ENCODE measurements at regions of chr1 and their contacts with region 1.

Region 1: DNA sequence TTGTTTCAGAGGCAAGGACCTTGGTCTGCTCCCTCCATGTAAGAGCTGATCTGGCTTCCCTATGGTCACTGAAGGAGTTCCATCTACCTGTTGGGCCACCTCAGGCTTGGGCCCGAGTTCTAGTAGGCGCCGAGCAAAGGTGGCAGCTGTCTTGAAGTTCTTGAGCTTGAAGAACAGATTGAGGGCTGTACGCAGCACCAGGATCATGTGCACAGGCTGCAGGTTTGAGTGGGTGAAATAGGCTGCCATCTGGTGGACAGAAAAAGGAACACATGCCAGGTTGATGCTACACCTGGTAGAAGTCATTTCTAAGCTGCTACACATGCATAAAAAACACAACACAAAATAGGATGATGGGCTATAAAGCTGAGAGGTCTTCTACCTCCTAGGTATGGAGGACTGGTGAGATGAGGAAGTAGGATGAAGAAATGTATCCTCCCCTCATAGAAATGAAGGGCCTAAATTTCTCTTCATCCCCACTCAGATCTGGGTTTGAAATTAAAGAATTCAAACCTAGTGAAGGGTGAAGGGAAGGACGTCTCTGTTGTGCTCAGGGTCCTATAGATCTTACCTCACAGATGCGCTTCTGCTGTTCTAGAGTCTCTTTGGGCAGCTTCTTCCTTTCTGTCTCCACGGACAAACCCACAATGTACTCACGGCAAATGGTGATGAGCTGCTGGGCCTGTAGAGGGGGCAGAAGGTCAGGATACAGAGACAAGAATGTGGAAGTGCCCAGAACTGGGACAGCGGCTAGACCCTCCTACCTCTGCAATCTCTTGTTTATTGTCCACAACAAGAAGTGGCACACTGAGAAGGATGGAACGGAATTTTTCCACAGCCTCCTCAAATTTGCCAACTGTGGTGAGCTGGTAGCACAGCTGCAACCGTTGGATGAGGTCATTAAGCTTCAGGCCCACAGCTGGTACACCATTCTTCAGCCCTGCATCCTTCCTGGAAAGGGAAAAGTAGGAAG is 6.6 kb upstream of the PEX19 start:
- DNase-seq: peak; percentile 45
- ATAC-seq: peak; percentile 99
- H3K4me3 ChIP-seq: no peak overlapping the region
- H3K27ac ChIP-seq: no peak overlapping the region
- H3K4me1 ChIP-seq: no peaks in the 10 kb centered on the region
- H3K27me3 ChIP-seq: no peaks in the 10 kb centered on the region
- CTCF ChIP-seq: peak; percentile 74 to 84 (median 80)
- EP300 ChIP-seq: no peak
- POLR2A ChIP-seq: no peak
- RAD21 ChIP-seq: peak; percentile 67

Region 2: DNA sequence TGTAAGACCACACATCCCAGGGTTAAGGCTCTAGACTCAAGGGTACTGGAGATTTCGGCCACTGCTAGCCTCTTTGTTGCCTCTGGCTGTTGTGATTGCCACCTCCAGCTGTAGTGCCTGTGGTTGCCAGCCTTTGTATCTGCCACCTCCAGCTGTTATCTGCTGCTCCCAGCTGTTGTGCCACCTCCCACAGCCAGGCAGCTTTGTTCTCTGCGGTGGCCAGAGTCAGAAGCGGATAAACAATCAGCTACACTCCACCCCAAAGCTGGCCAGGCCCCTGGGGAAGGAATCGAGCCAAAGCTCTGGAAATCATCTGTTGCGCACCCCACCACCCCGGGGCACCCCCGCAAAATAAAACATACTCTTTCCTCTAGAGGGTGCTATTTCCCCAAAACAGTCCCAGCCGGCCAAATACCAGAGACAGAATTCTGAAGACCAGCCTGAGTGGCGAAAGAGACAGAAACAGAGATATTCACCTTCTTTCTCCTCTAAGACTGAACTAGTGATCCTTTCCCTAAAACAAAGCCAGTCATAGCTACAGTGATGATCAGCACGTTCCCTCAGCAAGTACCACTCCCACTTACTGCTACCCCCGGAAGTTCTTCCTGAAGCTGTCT is 244.9 kb before region 1 on chr1:
- CTCF ChIA-PET with region 1: interaction called, 10 read pairs
- POLR2A ChIA-PET with region 1: interaction called, 5 read pairs
- RAD21 ChIA-PET with region 1: no interaction called
- SMC1A ChIA-PET with region 1: interaction called, 6 read pairs
- in situ Hi-C with region 1: no loop called
- intact Hi-C with region 1: no loop called
- DNase-seq: no peak
- ATAC-seq: peak; percentile 96
- H3K4me3 ChIP-seq: 0 out of 2 replicates have a peak overlapping the region, but pooled peaks have one; percentile 16
- H3K27ac ChIP-seq: no peak overlapping the region
- H3K4me1 ChIP-seq: peaks cover 11% of the 10 kb centered on the region
- H3K27me3 ChIP-seq: no peaks in the 10 kb centered on the region; a peak in 3 of 4 replicates
- CTCF ChIP-seq: peak; percentile 54 to 65 (median 61)
- EP300 ChIP-seq: no peak
- POLR2A ChIP-seq: no peak
- RAD21 ChIP-seq: peak; percentile 78

Region 3: GRCh38 chr1:160161965-160162705 is 129.4 kb before region 1 on chr1:
- CTCF ChIA-PET with region 1: interaction called, 20 read pairs
- POLR2A ChIA-PET with region 1: no interaction called
- RAD21 ChIA-PET with region 1: interaction called, 14 read pairs
- SMC1A ChIA-PET with region 1: interaction called, 4 read pairs
- in situ Hi-C with region 1: no loop called
- intact Hi-C with region 1: no loop called
- DNase-seq: no peak
- ATAC-seq: peak; percentile 92
- H3K4me3 ChIP-seq: no peak overlapping the region
- H3K27ac ChIP-seq: no peak overlapping the region
- H3K4me1 ChIP-seq: peaks cover 17% of the 10 kb centered on the region
- H3K27me3 ChIP-seq: no peaks in the 10 kb centered on the region; a peak in 1 of 4 replicates
- CTCF ChIP-seq: peak; percentile 51 to 63 (median 60); a peak in 5 of 6 replicates
- EP300 ChIP-seq: no peak
- POLR2A ChIP-seq: no peak
- RAD21 ChIP-seq: peak; percentile 72

Region 4: DNA sequence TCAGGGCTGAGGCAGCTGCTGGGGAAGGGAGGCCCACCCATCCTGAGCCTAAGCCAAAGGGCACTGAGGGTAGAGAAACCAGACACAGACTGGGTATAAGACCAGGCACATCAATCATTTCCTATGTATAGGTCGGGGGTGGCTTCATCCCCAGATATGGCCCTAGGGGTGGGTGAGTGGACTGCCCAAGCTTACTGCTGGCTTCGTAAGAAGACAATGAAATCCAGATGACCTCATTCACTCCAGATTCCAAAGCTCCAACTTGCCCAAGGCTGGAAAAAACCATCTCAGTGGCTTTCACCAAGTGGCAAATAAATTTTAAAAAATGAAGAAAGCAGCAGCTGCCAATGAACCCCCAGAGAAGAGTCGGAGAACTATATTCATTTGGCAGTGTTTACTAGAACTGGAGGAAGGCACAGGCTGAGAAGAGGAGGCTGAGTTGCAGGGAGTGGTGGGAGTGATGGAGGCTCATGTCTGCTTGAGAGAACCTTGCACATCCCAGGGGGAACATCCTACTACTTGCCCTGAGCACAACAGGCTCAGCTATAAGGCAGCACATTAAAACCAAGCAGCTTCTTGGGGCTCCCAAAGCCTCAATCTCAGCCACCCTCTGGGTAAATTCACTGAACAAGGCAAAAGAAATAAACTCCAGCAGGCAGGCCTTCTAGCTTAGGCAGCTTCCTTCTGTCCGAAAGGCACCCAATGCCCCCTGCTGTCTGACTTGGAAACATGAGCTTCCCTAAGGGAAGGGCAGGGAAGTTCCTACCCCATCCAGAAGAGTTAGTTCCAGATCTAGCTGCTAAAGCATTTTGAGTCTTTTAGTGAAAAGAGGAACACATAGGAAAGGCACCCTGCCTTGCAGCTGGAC is 72.2 kb before region 1 on chr1:
- CTCF ChIA-PET with region 1: interaction called, 26 read pairs
- POLR2A ChIA-PET with region 1: no interaction called
- RAD21 ChIA-PET with region 1: interaction called, 9 read pairs
- SMC1A ChIA-PET with region 1: interaction called, 13 read pairs
- in situ Hi-C with region 1: no loop called
- intact Hi-C with region 1: no loop called
- DNase-seq: no peak
- ATAC-seq: peak; percentile 44
- H3K4me3 ChIP-seq: no peak overlapping the region
- H3K27ac ChIP-seq: no peak overlapping the region
- H3K4me1 ChIP-seq: no peaks in the 10 kb centered on the region
- H3K27me3 ChIP-seq: no peaks in the 10 kb centered on the region
- CTCF ChIP-seq: peak; percentile 21 to 34 (median 34); a peak in 3 of 6 replicates
- EP300 ChIP-seq: no peak
- POLR2A ChIP-seq: no peak
- RAD21 ChIP-seq: peak; percentile 43

Region 5: DNA sequence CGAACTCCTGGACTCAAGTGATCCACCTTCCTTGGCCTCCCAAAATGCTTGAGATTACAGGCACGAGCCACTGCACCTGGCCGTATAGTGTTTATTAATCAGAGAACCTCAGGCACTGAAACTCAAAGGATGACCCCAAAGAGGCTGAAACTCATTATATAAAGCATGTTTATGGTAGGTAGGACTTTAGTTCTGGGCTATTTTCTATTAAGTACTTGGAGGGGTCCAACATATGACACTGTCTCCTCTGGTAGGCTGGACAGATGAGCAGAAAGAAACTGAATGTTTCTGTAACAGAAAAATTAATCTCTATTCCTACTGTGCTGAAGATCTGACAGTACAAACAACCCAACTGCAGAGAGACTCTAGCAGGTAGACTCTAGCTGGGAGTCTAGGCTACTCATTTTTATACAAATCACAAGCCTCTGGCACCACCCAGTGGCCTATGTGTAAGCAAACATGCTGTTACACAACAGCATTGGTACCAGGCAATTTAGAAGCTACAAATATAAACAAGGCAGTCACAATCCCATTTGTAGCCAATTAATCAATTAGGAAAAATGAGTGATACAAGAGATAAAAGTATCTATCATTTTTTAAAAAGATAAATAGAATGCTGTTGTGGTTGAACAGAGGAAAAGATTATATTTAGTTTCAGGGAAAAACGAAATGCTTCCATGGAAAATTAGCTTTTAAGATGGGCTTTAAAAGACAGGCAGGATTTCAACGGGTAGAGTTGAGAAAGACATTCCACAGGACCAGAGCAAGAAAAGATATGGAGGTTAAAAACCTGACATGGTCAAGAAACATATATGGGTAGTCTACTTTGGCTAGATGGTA is 39.6 kb before region 1 on chr1:
- CTCF ChIA-PET with region 1: interaction called, 141 read pairs
- POLR2A ChIA-PET with region 1: no interaction called
- RAD21 ChIA-PET with region 1: interaction called, 49 read pairs
- SMC1A ChIA-PET with region 1: interaction called, 98 read pairs
- in situ Hi-C with region 1: no loop called
- intact Hi-C with region 1: loop called (anchors 5 kb)
- DNase-seq: peak; percentile 31
- ATAC-seq: peak; percentile 98
- H3K4me3 ChIP-seq: no peak overlapping the region
- H3K27ac ChIP-seq: no peak overlapping the region; the same call in 1 of the 2 replicates
- H3K4me1 ChIP-seq: no peaks in the 10 kb centered on the region
- H3K27me3 ChIP-seq: no peaks in the 10 kb centered on the region
- CTCF ChIP-seq: peak; percentile 73 to 88 (median 73); a peak in 5 of 6 replicates
- EP300 ChIP-seq: no peak
- POLR2A ChIP-seq: no peak
- RAD21 ChIP-seq: peak; percentile 90

Region 6: GRCh38 chr1:160307118-160307854 is 15.8 kb after region 1 on chr1:
- CTCF ChIA-PET with region 1: interaction called, 17 read pairs
- POLR2A ChIA-PET with region 1: no interaction called
- RAD21 ChIA-PET with region 1: interaction called, 3 read pairs
- SMC1A ChIA-PET with region 1: interaction called, 8 read pairs
- in situ Hi-C with region 1: no loop called
- intact Hi-C with region 1: no loop called
- DNase-seq: no peak
- ATAC-seq: no peak
- H3K4me3 ChIP-seq: no peak overlapping the region
- H3K27ac ChIP-seq: no peak overlapping the region
- H3K4me1 ChIP-seq: no peaks in the 10 kb centered on the region
- H3K27me3 ChIP-seq: no peaks in the 10 kb centered on the region
- CTCF ChIP-seq: no peak
- EP300 ChIP-seq: no peak
- POLR2A ChIP-seq: no peak
- RAD21 ChIP-seq: no peak

Region 7: GRCh38 chr1:160376525-160377131 is 85.1 kb after region 1 on chr1:
- CTCF ChIA-PET with region 1: interaction called, 72 read pairs
- POLR2A ChIA-PET with region 1: no interaction called
- RAD21 ChIA-PET with region 1: interaction called, 28 read pairs
- SMC1A ChIA-PET with region 1: interaction called, 39 read pairs
- in situ Hi-C with region 1: no loop called
- intact Hi-C with region 1: loop called (anchors 1 kb)
- DNase-seq: peak; percentile 36
- ATAC-seq: peak; percentile 92
- H3K4me3 ChIP-seq: no peak overlapping the region
- H3K27ac ChIP-seq: no peak overlapping the region
- H3K4me1 ChIP-seq: peaks cover 15% of the 10 kb centered on the region
- H3K27me3 ChIP-seq: no peaks in the 10 kb centered on the region
- CTCF ChIP-seq: peak; percentile 96 to 99 (median 99); a peak in 5 of 6 replicates
- EP300 ChIP-seq: no peak
- POLR2A ChIP-seq: no peak
- RAD21 ChIP-seq: peak; percentile 95

Region 8: DNA sequence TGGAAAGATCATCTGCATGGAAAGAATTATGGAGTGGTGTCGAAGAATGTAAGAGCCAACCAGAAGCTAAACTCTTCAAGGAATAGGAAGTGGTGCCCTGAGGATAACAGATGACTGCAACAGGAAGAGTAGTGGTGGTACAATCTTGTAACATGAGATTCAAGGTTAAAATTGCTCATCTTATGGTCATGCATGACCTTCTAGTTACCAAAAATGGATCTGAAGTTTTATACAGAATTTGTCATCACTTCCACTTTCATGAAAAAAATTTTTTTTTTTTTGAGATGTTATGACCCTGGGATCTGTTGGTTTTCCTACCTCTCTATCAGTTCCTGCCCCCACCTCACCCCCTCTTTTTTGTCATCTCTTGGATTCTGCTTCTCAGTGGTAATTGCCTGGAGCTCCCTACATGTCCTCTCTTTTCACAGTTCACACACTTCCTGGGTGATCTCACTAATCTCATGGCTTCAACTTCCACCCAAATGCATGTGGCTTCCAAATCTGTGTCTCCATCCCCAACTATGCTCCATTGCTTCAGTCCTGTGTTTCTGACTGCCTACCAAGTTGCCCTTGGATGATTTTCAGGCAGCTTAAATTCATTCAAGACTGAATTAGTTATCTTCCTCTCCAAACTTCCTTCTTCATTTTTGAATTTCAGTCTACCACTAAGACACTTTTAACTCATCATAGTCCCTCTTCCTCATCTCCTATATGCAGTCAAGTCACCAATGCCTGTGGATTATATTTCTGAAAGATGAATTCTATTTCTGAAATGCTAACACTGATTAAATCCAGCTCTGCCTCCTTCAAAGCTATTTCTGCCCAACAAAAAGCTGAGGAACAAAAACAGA is 183.1 kb after region 1 on chr1:
- CTCF ChIA-PET with region 1: no interaction called
- POLR2A ChIA-PET with region 1: no interaction called
- RAD21 ChIA-PET with region 1: no interaction called
- SMC1A ChIA-PET with region 1: no interaction called
- in situ Hi-C with region 1: no loop called
- intact Hi-C with region 1: no loop called
- DNase-seq: peak; percentile 47
- ATAC-seq: peak; percentile 95
- H3K4me3 ChIP-seq: no peak overlapping the region; the same call in 1 of the 2 replicates
- H3K27ac ChIP-seq: peak overlapping the region; percentile 77
- H3K4me1 ChIP-seq: peaks cover 28% of the 10 kb centered on the region
- H3K27me3 ChIP-seq: no peaks in the 10 kb centered on the region
- CTCF ChIP-seq: no peak
- EP300 ChIP-seq: no peak; a peak in 1 of 4 replicates
- POLR2A ChIP-seq: no peak
- RAD21 ChIP-seq: no peak

Measured in GM12878 (cell line).